ENCODE measurements at regions of chr3 and their contacts with region 1.

Region 1: GRCh38 chr3:69013253-69014021 is at the start of gene EOGT:
- DNase-seq: peak; percentile 60 to 90 (median 76)
- ATAC-seq: peak; percentile 78
- H3K4me3 ChIP-seq: peak within 1 kb of the TSS; percentile 77
- H3K4me3 Mint-ChIP-seq: peak within 1 kb of the TSS; percentile 94
- H3K27ac ChIP-seq: peak within 1 kb of the TSS; percentile 10 to 39
- H3K27ac Mint-ChIP-seq: peak within 1 kb of the TSS; percentile 66
- H3K4me1 ChIP-seq: peaks cover 17% of the 10 kb centered on the region
- H3K4me1 Mint-ChIP-seq: peaks cover 34% of the 10 kb centered on the region
- H3K27me3 ChIP-seq: no peaks in the 10 kb centered on the region
- H3K27me3 Mint-ChIP-seq: no peaks in the 10 kb centered on the region
- CTCF ChIP-seq: peak; percentile 69
- total RNA-seq, gene EOGT: 13.0 to 13.4 TPM

Region 2: DNA sequence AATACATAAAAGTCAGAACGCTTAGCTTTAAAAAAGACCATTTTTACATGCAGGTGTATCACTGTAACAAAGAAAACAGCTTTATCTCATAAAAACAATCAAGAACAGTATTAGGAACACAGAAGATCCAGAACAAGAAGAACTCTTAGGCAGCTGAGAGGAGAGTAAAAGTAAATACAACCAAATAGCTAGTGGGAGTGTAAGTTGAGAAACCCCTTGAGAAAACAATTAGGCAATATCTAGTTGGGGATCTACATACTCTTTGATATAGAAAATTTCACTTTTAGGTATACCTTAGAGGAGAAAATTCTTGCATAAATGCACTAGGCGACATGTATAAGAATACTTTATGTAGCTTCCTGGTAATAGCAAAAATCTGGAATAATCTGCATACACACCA is 31.2 kb after region 1 on chr3:
- CTCF ChIA-PET with region 1: no interaction called
- POLR2A ChIA-PET with region 1: no interaction called
- intact Hi-C with region 1: loop called in 1 of 2 experiments (anchors 5 kb)
- DNase-seq: no peak
- ATAC-seq: no peak
- H3K4me3 ChIP-seq: no peak overlapping the region
- H3K4me3 Mint-ChIP-seq: no peak overlapping the region
- H3K27ac ChIP-seq: no peak overlapping the region
- H3K27ac Mint-ChIP-seq: no peak overlapping the region
- H3K4me1 ChIP-seq: peaks cover 6% of the 10 kb centered on the region
- H3K4me1 Mint-ChIP-seq: peaks cover 44% of the 10 kb centered on the region
- H3K27me3 ChIP-seq: no peaks in the 10 kb centered on the region
- H3K27me3 Mint-ChIP-seq: no peaks in the 10 kb centered on the region
- CTCF ChIP-seq: no peak

Measured in CD4-positive, alpha-beta T cell (primary cell).